Sciatic nerve (tissue), 2 donors: ENCODE measurements at regions of chr5 and their contacts with region 1.

Region 1: DNA sequence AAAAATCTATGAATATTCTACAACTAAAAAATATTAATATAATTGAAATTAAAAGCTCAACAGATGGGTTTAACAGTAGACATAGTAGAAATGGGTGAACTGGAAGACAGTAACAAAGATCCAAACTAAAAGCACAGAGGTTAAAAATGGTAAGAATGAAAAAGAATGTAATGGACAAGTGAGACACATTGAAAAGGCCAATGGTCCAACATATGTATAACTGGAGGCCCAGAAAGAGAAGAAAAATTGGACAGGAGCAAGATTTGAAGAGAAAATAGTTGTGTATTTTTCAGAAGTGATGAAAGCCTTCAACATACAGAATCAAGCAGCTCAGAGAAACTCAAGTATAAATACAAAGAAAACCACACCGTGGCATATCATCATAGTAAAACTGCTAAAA is 58.6 kb downstream of the PCDHGC5 start:
- DNase-seq: no peak
- ATAC-seq: no peak

Region 2: DNA sequence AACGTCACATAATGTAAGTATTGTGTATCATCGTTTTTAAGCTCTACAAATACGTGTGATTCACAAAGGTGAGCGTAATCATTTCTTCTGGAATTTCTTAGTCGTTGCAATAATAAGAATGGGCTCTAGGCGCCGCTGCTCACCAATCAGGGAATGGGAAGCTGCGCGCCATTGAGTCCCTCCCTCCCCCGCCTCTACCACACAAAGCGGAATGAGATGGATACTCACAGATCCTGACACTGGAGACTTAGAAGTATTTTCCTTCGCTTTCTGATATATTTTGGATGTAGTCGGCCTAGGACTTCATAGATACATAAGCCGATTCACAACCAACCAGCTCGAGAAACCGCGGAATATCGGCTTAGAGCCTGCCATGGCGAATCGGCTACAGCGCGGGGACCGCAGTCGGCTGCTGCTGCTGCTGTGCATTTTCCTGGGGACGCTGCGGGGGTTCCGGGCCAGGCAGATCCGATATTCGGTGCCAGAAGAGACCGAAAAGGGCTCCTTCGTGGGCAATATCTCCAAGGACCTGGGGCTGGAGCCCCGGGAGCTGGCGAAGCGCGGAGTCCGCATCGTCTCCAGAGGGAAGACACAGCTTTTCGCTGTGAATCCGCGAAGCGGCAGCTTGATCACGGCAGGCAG is 126.5 kb before region 1 on chr5 and contains the start of gene PCDHGA11:
- intact Hi-C with region 1: loop called (anchors 10 kb)
- DNase-seq: peak; percentile 60
- ATAC-seq: no peak
- total RNA-seq, gene PCDHGA11: 7.8 TPM

Region 3: DNA sequence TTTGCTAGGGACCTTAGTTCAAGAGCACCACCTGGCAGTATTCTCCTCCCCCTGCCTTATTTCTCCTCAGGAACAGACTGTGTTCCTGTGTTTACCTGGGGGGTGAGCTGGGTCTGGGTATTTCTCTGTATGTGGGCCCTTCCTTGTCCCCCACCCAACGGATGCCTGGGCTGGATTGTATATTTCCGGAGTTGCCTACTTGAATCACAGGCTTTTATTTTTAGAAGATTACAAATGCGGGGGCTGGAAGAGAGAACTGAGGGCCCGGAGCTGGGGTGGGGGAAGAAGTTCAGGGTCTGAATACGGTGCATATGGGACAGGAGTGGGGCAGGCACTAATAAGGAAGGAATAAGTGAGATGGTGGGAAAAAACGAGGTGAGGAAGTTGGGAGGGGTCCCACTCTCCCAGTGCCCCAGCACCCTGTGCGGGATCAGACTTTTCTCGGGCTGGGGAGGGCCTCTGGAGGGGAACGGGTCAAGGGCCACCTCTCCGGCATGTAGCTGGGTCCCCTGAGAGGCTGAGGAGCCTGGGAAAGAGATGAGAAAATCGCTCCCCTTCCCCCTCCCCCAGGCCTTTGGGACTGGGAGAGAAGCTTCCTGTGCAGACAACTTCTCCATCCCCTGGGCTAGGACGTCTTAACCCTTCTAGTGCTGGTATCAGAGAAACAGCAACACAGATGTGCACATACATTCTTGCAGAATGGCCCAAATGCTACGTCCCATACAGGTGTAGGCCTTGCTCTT is 288.6 kb after region 1 on chr5:
- intact Hi-C with region 1: no loop called
- DNase-seq: no peak
- ATAC-seq: peak; percentile 43